ENCODE measurements at regions of chr9 and their contacts with region 1.

Region 1: DNA sequence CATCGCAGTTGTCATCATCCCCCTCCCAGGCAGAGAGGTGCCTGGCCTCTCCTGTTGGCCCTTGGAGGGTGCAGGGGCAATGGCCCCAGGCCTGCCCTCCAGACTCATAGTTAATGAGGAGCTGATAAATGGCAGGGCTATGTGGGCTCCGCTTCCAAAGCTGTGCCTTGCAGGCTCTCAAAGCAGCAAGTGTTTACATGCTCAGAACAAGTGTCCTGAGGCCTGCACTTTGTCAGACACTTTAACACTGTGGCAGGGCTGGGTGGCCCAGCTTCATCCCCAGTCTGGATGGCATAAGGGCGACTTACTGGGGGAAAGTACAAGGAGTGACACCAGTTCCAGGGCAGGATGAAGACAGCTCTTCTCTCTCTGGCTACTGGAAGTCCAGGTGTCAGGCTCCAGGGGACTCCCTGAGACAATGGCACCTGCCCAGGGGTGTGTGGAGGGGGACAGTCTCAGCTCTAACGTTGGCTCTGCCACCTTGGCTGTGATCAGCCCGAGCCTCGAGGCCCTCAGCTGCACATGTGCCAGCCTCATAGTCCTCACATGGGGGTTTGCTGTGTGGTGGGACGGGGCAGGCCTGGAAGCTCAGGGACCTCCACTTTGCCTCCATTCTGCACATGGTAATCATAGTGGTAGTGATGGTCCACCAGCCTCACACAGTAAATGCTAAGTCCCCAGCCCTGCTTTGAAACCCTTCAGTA is 153.4 kb downstream of the BARX1 start:
- DNase-seq: no peak
- H3K4me3 ChIP-seq: no peak overlapping the region
- H3K27ac ChIP-seq: no peak overlapping the region
- H3K4me1 ChIP-seq: no peaks in the 10 kb centered on the region
- H3K27me3 ChIP-seq: peaks cover 8% of the 10 kb centered on the region
- CTCF ChIP-seq: no peak

Region 2: DNA sequence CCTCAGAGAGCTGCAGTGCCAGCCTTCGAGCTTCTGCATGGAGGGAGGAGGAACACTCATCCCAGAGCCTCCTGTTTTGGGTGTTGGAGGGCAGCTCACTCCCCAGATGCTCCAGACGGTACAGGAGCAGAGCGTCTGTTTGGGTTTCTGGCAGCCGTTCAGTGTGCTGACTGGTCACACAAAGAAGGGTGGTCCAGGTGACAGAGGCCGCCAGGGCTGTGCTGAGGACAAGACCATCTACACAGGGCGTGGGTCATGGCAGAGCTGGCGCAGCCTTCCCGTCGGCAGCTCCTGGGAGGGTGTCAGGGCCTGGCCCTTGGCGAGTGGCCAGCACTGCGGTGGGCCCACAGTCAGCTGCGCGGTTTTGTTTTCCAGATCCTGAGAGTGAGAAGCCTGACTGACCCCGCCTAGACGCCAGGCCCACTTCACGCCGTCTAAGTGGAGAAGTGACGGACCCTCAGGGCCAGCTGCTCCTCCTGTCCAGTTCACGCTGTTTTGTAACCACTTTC is 481.7 kb before region 1 on chr9:
- CTCF ChIA-PET with region 1: no interaction called
- POLR2A ChIA-PET with region 1: no interaction called
- intact Hi-C with region 1: no loop called
- DNase-seq: no peak
- H3K4me3 ChIP-seq: no peak overlapping the region
- H3K27ac ChIP-seq: no peak overlapping the region
- H3K4me1 ChIP-seq: no peaks in the 10 kb centered on the region
- H3K27me3 ChIP-seq: no peaks in the 10 kb centered on the region
- CTCF ChIP-seq: no peak

Region 3: GRCh38 chr9:93486269-93486668 is 315.5 kb before region 1 on chr9:
- CTCF ChIA-PET with region 1: no interaction called
- POLR2A ChIA-PET with region 1: no interaction called
- intact Hi-C with region 1: no loop called
- DNase-seq: no peak
- H3K4me3 ChIP-seq: no peak overlapping the region
- H3K27ac ChIP-seq: peak overlapping the region; percentile 64
- H3K4me1 ChIP-seq: peaks cover 8% of the 10 kb centered on the region; the same call in 1 of the 2 replicates
- H3K27me3 ChIP-seq: no peaks in the 10 kb centered on the region
- CTCF ChIP-seq: no peak

Region 4: DNA sequence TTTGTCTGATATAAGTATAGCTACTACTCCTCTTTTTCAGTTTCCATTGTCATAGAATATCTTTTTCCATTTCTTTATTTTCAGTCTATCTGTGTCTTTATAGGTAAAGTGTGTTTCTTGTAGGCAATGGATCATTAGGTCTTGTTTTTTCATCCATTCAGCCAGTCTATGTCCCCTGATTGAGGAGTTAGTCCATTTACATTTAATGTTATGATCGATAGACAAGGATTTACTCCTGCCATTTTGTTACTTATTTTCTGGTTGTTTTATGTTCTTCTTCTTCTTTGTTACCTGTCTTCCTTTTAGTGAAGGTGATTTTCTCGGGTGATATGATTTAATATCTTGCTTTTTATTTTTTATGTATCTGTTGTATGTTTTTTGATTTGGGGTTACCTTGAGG is 15.5 kb before region 1 on chr9:
- CTCF ChIA-PET with region 1: no interaction called
- POLR2A ChIA-PET with region 1: no interaction called
- intact Hi-C with region 1: loop called (anchors 1 kb)
- DNase-seq: no peak
- H3K4me3 ChIP-seq: no peak overlapping the region
- H3K27ac ChIP-seq: no peak overlapping the region
- H3K4me1 ChIP-seq: no peaks in the 10 kb centered on the region
- H3K27me3 ChIP-seq: no peaks in the 10 kb centered on the region; the same call in none of the 2 replicates
- CTCF ChIP-seq: no peak

Region 5: GRCh38 chr9:93978551-93978950 is 176.8 kb after region 1 on chr9:
- CTCF ChIA-PET with region 1: no interaction called
- POLR2A ChIA-PET with region 1: no interaction called
- intact Hi-C with region 1: no loop called
- DNase-seq: no peak
- H3K4me3 ChIP-seq: no peak overlapping the region
- H3K27ac ChIP-seq: no peak overlapping the region
- H3K4me1 ChIP-seq: no peaks in the 10 kb centered on the region
- H3K27me3 ChIP-seq: peaks cover 6% of the 10 kb centered on the region
- CTCF ChIP-seq: no peak